ENCODE measurements at regions of chr14 and their contacts with region 1.

Region 1: DNA sequence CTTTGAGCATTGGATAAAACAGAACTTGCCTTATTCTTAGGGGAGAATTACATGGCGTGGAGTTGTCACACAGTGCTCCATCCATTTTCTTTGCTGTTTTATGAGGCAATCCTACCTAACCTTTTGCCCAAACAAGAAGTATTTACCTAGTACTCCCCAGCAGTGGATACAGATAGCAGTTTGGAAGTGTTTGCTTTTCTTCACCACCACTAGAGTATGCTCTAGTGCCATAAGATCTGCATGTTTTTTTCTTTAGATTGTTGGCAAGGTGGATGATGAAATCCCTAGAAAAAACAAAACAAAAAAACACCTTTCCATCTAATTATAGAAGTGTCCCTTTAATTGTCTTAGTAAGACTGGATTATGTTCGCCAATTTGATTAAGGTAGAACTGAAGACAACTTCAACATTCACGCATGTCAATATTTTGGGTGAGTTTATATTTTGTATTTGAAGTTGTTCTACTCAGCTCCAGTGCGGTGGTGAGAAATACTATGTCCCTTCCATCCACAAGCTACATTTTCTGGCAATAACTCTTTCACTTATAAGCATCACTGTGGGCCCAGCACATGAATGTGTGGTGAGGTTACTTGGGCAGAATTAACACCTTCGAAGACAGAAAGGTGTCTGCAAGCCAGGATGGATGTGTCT is 23.6 kb upstream of the TMEM260 start:
- DNase-seq: no peak
- H3K4me3 Mint-ChIP-seq: no peak overlapping the region
- H3K27ac Mint-ChIP-seq: peak overlapping the region; percentile 29
- H3K4me1 Mint-ChIP-seq: no peaks in the 10 kb centered on the region
- H3K27me3 Mint-ChIP-seq: peaks cover 50% of the 10 kb centered on the region
- CTCF ChIP-seq: peak; percentile 31

Region 2: DNA sequence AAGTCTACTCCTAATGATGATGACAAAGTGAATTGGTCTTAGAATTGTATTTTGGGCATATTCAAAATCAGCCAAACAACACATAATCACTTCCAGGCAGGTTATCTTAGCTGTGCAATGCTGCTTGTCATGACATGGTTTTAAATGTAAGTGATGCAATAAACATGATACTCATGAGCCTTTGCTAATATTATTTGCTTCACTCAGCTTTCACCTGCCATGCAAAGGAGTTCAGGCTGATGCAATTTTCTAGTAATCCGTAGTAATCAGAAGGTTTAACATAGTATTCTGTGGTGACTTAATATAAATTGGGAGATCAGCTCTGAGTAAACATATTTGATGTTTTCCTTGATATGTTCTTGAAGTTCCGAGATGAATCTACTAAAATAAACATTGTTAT is 52.6 kb after region 1 on chr14:
- CTCF ChIA-PET with region 1: no interaction called
- intact Hi-C with region 1: no loop called
- DNase-seq: no peak
- H3K4me3 Mint-ChIP-seq: no peak overlapping the region
- H3K27ac Mint-ChIP-seq: no peak overlapping the region
- H3K4me1 Mint-ChIP-seq: no peaks in the 10 kb centered on the region
- H3K27me3 Mint-ChIP-seq: no peaks in the 10 kb centered on the region
- CTCF ChIP-seq: no peak

Region 3: DNA sequence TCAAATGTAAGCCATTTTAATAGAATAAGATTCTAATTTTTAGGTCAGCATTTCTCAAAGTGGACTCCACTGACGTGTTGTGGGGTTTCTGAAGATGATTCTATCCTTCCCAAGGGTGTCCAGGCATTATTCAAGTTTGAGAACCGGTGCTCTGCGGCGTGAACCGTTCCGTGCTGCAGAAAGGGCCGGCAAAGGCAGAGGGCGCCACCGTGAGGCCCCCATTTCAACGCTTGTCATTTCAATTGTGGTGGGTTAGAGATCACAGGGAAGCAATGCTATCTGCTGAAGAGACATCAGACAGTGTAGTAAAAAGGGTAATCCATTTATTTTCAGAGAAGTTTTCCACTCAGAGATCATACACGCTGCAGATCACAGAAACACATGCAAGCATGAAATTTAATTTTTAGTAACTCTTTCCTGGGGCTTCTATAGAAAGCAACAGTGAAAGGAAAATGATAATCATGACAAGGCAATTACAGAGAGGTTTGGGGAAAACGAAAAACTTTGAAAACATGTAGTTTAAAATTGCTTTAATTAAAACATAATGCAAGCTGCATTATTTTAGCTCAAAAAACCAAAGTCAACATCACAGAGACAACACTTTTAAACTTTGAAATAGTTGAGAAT is 511.0 kb after region 1 on chr14:
- CTCF ChIA-PET with region 1: no interaction called
- intact Hi-C with region 1: loop called (anchors 10 kb)
- DNase-seq: peak; percentile 52
- H3K4me3 Mint-ChIP-seq: no peak overlapping the region
- H3K27ac Mint-ChIP-seq: no peak overlapping the region
- H3K4me1 Mint-ChIP-seq: no peaks in the 10 kb centered on the region
- H3K27me3 Mint-ChIP-seq: peaks cover 11% of the 10 kb centered on the region
- CTCF ChIP-seq: peak; percentile 55

Measured in Calu3 (cell line).